Mammary epithelial cell (primary cell): ENCODE measurements at regions of chr1 and their contacts with region 1.

Region 1: DNA sequence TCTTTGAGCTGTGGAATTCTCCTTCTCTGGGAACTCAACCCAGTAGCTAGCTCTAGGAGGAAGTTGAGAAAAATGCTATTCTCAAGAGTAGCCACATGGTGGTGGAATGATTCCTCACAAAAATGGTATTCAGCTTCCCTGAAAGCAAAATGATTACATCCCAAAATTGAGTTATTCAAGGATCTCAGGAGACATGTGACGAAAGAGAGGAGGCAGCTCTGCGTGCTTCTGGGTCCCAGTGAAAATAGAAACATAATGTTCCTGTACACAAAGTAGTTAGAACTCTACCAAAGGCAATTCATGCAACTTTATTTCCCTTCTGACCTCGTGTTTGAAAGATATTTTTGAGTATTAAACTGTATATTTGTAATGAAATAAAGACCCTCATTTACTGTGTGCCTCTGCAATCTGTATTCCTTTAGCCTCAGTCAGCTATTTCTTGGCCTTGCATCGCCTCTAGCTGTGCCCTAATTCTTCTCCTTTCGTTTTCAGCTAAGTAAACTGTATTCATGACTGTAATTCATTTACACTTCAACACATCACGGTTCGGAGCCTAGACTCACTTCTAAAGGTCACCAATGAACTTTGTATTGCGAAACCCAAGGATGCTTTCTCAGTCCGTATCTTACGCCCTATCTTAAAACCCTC is 167.3 kb downstream of the FASLG start:
- DNase-seq: peak; percentile 68
- H3K4me3 ChIP-seq: no peak overlapping the region
- H3K27ac ChIP-seq: no peak overlapping the region
- H3K4me1 ChIP-seq: peaks cover 5% of the 10 kb centered on the region
- H3K27me3 ChIP-seq: no peaks in the 10 kb centered on the region
- CTCF ChIP-seq: peak; percentile 56 to 73

Region 2: GRCh38 chr1:172948457-172948856 is 122.2 kb after region 1 on chr1:
- CTCF ChIA-PET with region 1: no interaction called
- dilution Hi-C with region 1: no loop called
- in situ Hi-C with region 1: no loop called
- intact Hi-C with region 1: loop called (anchors 1 kb)
- DNase-seq: peak; percentile 92
- H3K4me3 ChIP-seq: no peak overlapping the region
- H3K27ac ChIP-seq: no peak overlapping the region
- H3K4me1 ChIP-seq: peaks cover 29% of the 10 kb centered on the region
- H3K27me3 ChIP-seq: no peaks in the 10 kb centered on the region
- CTCF ChIP-seq: no peak

Region 3: GRCh38 chr1:173002891-173003838 is 176.9 kb after region 1 on chr1:
- CTCF ChIA-PET with region 1: no interaction called
- dilution Hi-C with region 1: no loop called
- in situ Hi-C with region 1: no loop called
- intact Hi-C with region 1: loop called (anchors 5 kb)
- DNase-seq: peak; percentile 88
- H3K4me3 ChIP-seq: no peak overlapping the region
- H3K27ac ChIP-seq: peak overlapping the region; percentile 27
- H3K4me1 ChIP-seq: peaks cover 13% of the 10 kb centered on the region
- H3K27me3 ChIP-seq: no peaks in the 10 kb centered on the region
- CTCF ChIP-seq: no peak

Region 4: DNA sequence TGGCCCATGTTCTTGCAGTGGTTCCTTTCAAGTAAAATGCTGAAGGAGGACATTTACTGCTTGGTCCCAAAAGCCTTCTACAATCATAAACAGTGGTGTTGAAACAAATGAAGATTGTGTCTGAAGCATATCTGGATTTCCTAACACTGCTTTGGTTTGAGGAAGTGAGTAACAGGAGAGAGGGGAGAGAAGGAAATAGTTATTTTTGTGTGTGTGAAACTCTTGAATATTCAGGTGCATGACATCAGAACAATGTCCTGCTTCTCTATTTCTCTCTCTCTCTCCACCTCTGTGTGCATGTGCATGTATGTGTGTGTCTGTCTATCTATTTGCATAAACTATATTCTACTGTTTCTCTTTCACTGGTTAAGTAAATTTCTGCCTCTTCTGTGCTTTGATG is 285.9 kb after region 1 on chr1:
- CTCF ChIA-PET with region 1: no interaction called
- dilution Hi-C with region 1: no loop called
- in situ Hi-C with region 1: no loop called
- intact Hi-C with region 1: loop called (anchors 2 kb)
- DNase-seq: peak; percentile 62
- H3K4me3 ChIP-seq: no peak overlapping the region
- H3K27ac ChIP-seq: no peak overlapping the region
- H3K4me1 ChIP-seq: peaks cover 15% of the 10 kb centered on the region
- H3K27me3 ChIP-seq: no peaks in the 10 kb centered on the region
- CTCF ChIP-seq: no peak

Region 5: DNA sequence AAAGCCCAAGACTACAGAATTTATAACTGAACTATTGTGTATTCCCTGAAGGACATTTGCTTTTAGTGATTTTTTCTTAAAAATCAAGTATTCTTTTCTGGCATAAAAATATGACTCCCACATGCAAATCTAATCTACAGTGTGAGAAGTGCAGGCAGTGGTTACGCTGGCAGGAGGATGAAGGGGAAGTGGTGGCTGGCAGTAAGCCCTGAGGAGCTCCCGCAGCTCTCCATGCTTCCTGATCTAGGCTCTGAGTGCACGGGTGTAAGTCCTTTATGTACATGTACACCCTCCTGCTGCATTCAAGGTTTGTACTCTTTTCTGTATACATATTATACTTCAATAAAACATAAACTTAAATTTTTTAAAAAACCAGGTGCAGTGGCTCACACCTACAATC is 583.4 kb after region 1 on chr1:
- CTCF ChIA-PET with region 1: no interaction called
- dilution Hi-C with region 1: no loop called
- in situ Hi-C with region 1: no loop called
- intact Hi-C with region 1: loop called (anchors 5 kb)
- DNase-seq: peak; percentile 37
- H3K4me3 ChIP-seq: no peak overlapping the region
- H3K27ac ChIP-seq: no peak overlapping the region
- H3K4me1 ChIP-seq: peaks cover 20% of the 10 kb centered on the region
- H3K27me3 ChIP-seq: no peaks in the 10 kb centered on the region
- CTCF ChIP-seq: no peak